Heart left ventricle (tissue), 16 donors: ENCODE measurements at regions of chr1 and their contacts with region 1.

Region 1: DNA sequence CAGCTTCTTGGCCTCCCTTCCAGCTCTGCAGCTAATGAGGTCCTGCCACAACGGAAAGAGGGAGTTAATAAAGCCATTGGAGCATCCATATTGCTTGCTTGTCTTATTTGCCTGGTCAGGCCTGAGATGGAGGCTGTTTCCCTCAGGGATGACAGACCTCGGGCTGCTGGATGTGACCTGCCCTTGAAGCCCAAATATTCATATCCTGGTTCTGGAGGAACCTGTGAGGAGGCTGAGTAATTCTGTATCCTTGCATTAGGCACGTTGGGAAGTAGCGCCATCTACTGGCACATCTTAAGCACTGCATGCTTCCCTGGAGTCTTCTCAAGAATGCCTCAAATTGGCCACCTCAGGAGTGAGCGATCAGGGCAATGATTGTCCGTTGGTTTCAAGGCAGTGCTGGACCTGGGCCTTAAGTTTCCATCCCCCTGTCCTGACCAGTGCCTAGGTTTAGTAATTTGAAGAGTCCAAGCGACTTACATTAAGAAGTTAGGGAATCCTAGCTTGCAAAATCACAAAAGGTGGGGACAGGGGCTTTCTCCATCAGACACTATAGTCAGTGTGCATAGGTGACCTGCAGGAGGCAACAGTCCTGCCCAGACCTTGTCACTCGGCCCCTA is 13.8 kb upstream of the NASP start:
- DNase-seq: peak; percentile 41 to 68 (median 65)
- ATAC-seq: peak; percentile 15 to 83 (median 80)
- H3K4me3 ChIP-seq: no peak overlapping the region
- H3K27ac ChIP-seq: no peak overlapping the region
- H3K4me1 ChIP-seq: peaks cover 0 to 12% (median 8%) of the 10 kb centered on the region in 12 donors
- H3K27me3 ChIP-seq: no peaks in the 10 kb centered on the region
- CTCF ChIP-seq: peak; percentile 95 to 100 (median 98)
- POLR2A ChIP-seq: no peak

Region 2: GRCh38 chr1:45359882-45360513 is 210.1 kb before region 1 on chr1:
- intact Hi-C with region 1: loop called (anchors 2 to 5 kb)
- DNase-seq: peak in 4 of 5 donors; percentile 60 to 77 (median 70)
- ATAC-seq: peak; percentile 70 to 87 (median 84)
- H3K4me3 ChIP-seq: peak overlapping the region in 6 of 12 donors; percentile 1 to 26 (median 16)
- H3K27ac ChIP-seq: peak overlapping the region; percentile 19 to 83 (median 65)
- H3K4me1 ChIP-seq: peaks cover 0 to 21% (median 14%) of the 10 kb centered on the region in 12 donors
- H3K27me3 ChIP-seq: no peaks in the 10 kb centered on the region
- CTCF ChIP-seq: peak; percentile 57 to 86 (median 77)
- POLR2A ChIP-seq: no peak

Region 3: DNA sequence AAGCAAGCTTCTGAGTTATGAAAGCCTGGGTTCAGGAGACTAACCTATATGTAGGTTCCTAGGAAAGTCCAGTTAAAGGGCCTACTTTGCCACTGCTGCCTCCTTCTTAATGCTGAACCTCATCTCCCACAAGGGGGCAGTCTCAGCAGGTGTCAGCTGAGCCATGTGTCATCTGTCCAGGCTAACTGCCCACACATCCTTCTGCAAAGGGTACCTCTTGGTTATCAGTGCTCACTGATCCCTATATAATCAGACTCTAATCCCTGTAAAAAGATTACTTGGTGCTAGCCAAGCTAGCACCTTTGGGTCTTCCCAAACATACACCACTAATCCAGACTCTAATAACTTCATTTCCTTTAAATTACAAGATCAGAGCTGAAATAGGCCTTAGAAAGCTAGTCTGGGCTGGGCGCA is 57.4 kb before region 1 on chr1:
- intact Hi-C with region 1: loop called (anchors 1 to 5 kb)
- DNase-seq: peak in 4 of 5 donors; percentile 54 to 62 (median 56)
- ATAC-seq: peak in 3 of 4 donors; percentile 66 to 70 (median 69)
- H3K4me3 ChIP-seq: no peak overlapping the region
- H3K27ac ChIP-seq: no peak overlapping the region
- H3K4me1 ChIP-seq: peaks cover 0 to 28% (median 16%) of the 10 kb centered on the region in 12 donors
- H3K27me3 ChIP-seq: no peaks in the 10 kb centered on the region
- CTCF ChIP-seq: peak; percentile 51 to 81 (median 68)
- POLR2A ChIP-seq: no peak

Region 4: DNA sequence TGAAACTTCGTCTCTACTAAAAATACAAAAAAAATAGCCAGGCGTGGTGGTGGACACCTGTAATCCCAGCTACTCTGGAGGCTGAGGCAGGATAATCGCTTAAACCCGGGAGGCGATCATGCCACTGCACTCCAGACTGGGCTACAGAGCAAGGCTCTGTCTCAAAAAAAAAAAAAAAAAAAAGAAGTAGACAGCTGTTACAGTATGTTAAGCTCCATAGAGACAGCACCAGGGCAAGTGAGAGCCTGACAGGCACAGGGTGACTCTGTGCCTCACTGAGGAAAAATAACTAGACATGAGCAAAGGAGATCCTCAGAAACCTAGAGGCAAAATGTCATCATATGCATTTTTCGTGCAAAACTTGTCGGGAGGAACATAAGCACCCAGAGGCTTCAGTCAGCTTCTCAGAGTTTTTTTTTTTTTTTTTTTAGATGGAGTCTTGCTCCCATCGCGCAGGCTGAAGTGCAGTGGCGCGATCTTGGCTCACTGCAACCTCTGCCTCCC is 39.4 kb before region 1 on chr1:
- intact Hi-C with region 1: no loop called
- DNase-seq: no peak
- ATAC-seq: no peak
- H3K4me3 ChIP-seq: no peak overlapping the region
- H3K27ac ChIP-seq: no peak overlapping the region
- H3K4me1 ChIP-seq: peaks cover 0 to 10% (median 0%) of the 10 kb centered on the region in 12 donors
- H3K27me3 ChIP-seq: no peaks in the 10 kb centered on the region
- CTCF ChIP-seq: no peak
- POLR2A ChIP-seq: no peak

Region 5: GRCh38 chr1:45843474-45843905 is 273.4 kb after region 1 on chr1:
- intact Hi-C with region 1: no loop called
- DNase-seq: no peak
- ATAC-seq: peak in 1 of 4 donors; percentile 42
- H3K4me3 ChIP-seq: no peak overlapping the region
- H3K27ac ChIP-seq: peak overlapping the region in 1 of 12 donors; percentile 14
- H3K4me1 ChIP-seq: peaks cover 0 to 17% (median 3%) of the 10 kb centered on the region in 12 donors
- H3K27me3 ChIP-seq: no peaks in the 10 kb centered on the region
- CTCF ChIP-seq: peak in 8 of 12 donors; percentile 13 to 39 (median 23)
- POLR2A ChIP-seq: no peak